ENCODE measurements at regions of chr14 and their contacts with region 1.

Region 1: DNA sequence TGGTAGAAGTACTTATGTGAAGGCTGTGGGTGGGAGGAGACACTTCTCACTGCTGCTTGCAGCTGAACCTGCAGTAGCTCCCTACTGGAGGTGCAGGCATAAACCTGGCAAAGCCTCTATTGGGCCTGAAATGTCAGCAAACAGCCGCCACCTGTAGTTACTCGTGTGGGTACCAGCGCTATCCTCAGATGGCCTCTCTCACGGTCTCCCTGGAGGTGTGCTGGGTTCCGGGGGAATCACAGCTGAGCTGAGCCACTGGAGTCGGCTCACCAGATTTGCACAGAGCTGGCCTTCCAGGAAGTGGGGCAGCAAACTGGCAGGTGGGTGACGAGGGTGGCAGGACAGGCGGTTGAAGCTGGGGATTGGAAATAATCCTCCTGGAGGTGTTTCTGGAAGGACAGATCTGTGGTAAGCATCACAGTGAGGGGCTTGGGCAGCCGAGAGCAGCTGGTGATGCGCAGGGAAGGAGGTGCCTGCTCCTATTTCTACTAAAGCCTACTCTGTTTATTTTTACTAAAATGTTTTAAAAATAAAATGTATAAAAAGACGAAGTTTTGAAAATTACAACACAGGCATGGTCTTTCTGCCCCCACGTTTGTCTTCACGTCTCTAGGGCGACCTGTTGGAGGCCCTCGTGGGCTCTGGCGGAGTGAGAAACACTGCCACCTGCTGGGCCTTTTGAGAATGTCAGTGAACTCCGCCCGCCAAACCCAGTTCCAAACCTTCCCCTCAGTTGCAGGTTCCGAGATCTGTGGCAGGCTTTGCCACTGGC is 67.8 kb upstream of the PLEKHG3 start:
- DNase-seq: peak; percentile 55 to 73 (median 63)
- H3K4me3 ChIP-seq: no peak overlapping the region
- H3K4me3 Mint-ChIP-seq: no peak overlapping the region
- H3K27ac ChIP-seq: no peak overlapping the region
- H3K27ac Mint-ChIP-seq: peak overlapping the region in 2 of 7 donors; percentile 8 to 17
- H3K4me1 ChIP-seq: no peaks in the 10 kb centered on the region
- H3K4me1 Mint-ChIP-seq: peaks cover 0 to 5% (median 4%) of the 10 kb centered on the region in 4 donors
- H3K27me3 ChIP-seq: no peaks in the 10 kb centered on the region
- H3K27me3 Mint-ChIP-seq: peaks cover 1 to 5% of the 10 kb centered on the region in 2 donors

Region 2: DNA sequence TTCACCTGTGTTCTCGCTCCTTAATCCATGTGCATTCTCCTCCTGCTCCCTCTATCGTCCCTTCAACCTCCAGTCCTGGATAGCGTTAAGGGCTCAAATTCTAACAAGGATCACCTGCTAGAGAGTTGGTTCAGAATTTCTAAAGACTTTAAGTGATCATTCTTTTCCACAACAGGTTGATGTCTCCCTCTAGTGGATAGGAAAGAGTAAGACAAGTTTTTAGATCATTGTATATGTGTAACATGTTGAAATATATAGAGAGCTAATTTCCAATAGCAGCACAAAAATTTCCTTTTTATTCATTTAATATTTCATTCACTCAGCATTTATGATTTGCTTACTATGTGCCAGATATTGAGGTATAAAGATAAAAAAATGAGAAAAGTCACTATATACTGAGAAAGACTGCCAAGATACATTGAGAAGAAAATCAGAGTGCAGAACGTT is 332.9 kb before region 1 on chr14:
- CTCF ChIA-PET with region 1: interaction called, 10 read pairs
- POLR2A ChIA-PET with region 1: no interaction called
- intact Hi-C with region 1: no loop called
- DNase-seq: peak in 4 of 5 donors; percentile 44 to 58 (median 50)
- H3K4me3 ChIP-seq: no peak overlapping the region
- H3K4me3 Mint-ChIP-seq: no peak overlapping the region
- H3K27ac ChIP-seq: no peak overlapping the region
- H3K27ac Mint-ChIP-seq: no peak overlapping the region
- H3K4me1 ChIP-seq: no peaks in the 10 kb centered on the region
- H3K4me1 Mint-ChIP-seq: peaks cover 0 to 4% (median 2%) of the 10 kb centered on the region in 4 donors
- H3K27me3 ChIP-seq: peaks cover 2% of the 10 kb centered on the region
- H3K27me3 Mint-ChIP-seq: peaks cover 0 to 3% of the 10 kb centered on the region in 2 donors

Region 3: GRCh38 chr14:64345513-64345912 is 290.9 kb before region 1 on chr14:
- CTCF ChIA-PET with region 1: interaction called, 33 read pairs
- POLR2A ChIA-PET with region 1: no interaction called
- intact Hi-C with region 1: loop called (anchors 1 kb)
- DNase-seq: no peak
- H3K4me3 ChIP-seq: no peak overlapping the region
- H3K4me3 Mint-ChIP-seq: no peak overlapping the region
- H3K27ac ChIP-seq: no peak overlapping the region
- H3K27ac Mint-ChIP-seq: no peak overlapping the region
- H3K4me1 ChIP-seq: no peaks in the 10 kb centered on the region
- H3K4me1 Mint-ChIP-seq: peaks cover 0 to 2% (median 0%) of the 10 kb centered on the region in 4 donors
- H3K27me3 ChIP-seq: no peaks in the 10 kb centered on the region
- H3K27me3 Mint-ChIP-seq: peaks cover 0 to 2% of the 10 kb centered on the region in 2 donors

Region 4: GRCh38 chr14:64510825-64511671 is 125.3 kb before region 1 on chr14:
- CTCF ChIA-PET with region 1: interaction called, 12 read pairs
- POLR2A ChIA-PET with region 1: no interaction called
- intact Hi-C with region 1: loop called (anchors 1 kb)
- DNase-seq: peak; percentile 65 to 72 (median 69)
- H3K4me3 ChIP-seq: no peak overlapping the region
- H3K4me3 Mint-ChIP-seq: peak overlapping the region in 7 of 8 donors; percentile 12 to 93 (median 65)
- H3K27ac ChIP-seq: peak overlapping the region; percentile 59
- H3K27ac Mint-ChIP-seq: peak overlapping the region; percentile 54 to 94 (median 88)
- H3K4me1 ChIP-seq: peaks cover 92% of the 10 kb centered on the region
- H3K4me1 Mint-ChIP-seq: peaks cover 62 to 93% (median 81%) of the 10 kb centered on the region in 4 donors
- H3K27me3 ChIP-seq: no peaks in the 10 kb centered on the region
- H3K27me3 Mint-ChIP-seq: no peaks in the 10 kb centered on the region

Region 5: GRCh38 chr14:64612021-64612380 is 24.4 kb before region 1 on chr14:
- CTCF ChIA-PET with region 1: interaction called, 16 read pairs
- POLR2A ChIA-PET with region 1: no interaction called
- intact Hi-C with region 1: no loop called
- DNase-seq: no peak
- H3K4me3 ChIP-seq: no peak overlapping the region
- H3K4me3 Mint-ChIP-seq: no peak overlapping the region
- H3K27ac ChIP-seq: no peak overlapping the region
- H3K27ac Mint-ChIP-seq: no peak overlapping the region
- H3K4me1 ChIP-seq: no peaks in the 10 kb centered on the region
- H3K4me1 Mint-ChIP-seq: no peaks in the 10 kb centered on the region
- H3K27me3 ChIP-seq: no peaks in the 10 kb centered on the region
- H3K27me3 Mint-ChIP-seq: peaks cover 2% of the 10 kb centered on the region in 2 donors

Region 6: DNA sequence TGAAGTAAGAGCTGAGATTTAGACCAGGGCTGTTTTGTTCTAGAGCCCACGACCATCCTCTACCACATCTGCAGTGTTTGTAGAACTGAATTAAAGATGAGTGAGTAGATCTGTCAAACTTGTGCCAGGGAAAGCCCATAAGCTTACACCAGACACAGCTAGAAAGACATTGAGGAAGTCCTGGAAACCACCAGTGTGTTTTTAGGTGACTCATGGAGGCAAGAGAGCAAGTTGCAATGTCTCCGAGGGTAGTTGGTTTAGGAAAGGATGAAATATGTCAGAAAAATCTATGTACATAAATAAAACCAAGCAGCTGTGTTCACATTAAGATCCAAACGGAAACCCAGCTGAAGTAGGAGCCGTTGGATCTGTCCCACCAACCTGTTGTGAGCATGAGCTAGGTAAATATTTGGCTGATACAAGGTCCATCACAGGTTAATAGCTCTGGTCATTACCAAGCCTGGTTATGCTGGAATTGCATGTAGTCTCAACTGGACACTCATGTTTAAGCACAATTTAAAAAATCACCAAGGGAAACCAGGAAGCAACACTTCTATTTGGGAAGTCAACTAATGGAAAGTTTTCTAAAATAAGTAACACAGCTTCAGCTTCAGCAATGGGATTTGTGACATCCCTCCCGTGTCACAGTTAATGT is 18.0 kb after region 1 on chr14:
- CTCF ChIA-PET with region 1: interaction called, 17 read pairs
- POLR2A ChIA-PET with region 1: no interaction called
- intact Hi-C with region 1: no loop called
- DNase-seq: no peak
- H3K4me3 ChIP-seq: no peak overlapping the region
- H3K4me3 Mint-ChIP-seq: no peak overlapping the region
- H3K27ac ChIP-seq: no peak overlapping the region
- H3K27ac Mint-ChIP-seq: no peak overlapping the region
- H3K4me1 ChIP-seq: no peaks in the 10 kb centered on the region
- H3K4me1 Mint-ChIP-seq: peaks cover 6 to 14% (median 9%) of the 10 kb centered on the region in 4 donors
- H3K27me3 ChIP-seq: no peaks in the 10 kb centered on the region
- H3K27me3 Mint-ChIP-seq: peaks cover 4 to 12% of the 10 kb centered on the region in 2 donors

Region 7: GRCh38 chr14:65042731-65043372 is 406.5 kb after region 1 on chr14:
- CTCF ChIA-PET with region 1: no interaction called
- POLR2A ChIA-PET with region 1: no interaction called
- intact Hi-C with region 1: no loop called
- DNase-seq: no peak
- H3K4me3 ChIP-seq: no peak overlapping the region
- H3K4me3 Mint-ChIP-seq: no peak overlapping the region
- H3K27ac ChIP-seq: no peak overlapping the region
- H3K27ac Mint-ChIP-seq: peak overlapping the region in 3 of 7 donors; percentile 1 to 57 (median 33)
- H3K4me1 ChIP-seq: no peaks in the 10 kb centered on the region
- H3K4me1 Mint-ChIP-seq: peaks cover 4 to 12% (median 6%) of the 10 kb centered on the region in 4 donors
- H3K27me3 ChIP-seq: no peaks in the 10 kb centered on the region
- H3K27me3 Mint-ChIP-seq: no peaks in the 10 kb centered on the region

Measured in CD4-positive, alpha-beta memory T cell (primary cell).